Lower leg skin (tissue), 4 donors: ENCODE measurements at regions of chr11 and their contacts with region 1.

Region 1: GRCh38 chr11:130464291-130464812 is 15.9 kb downstream of the ADAMTS15 start:
- DNase-seq: no peak
- H3K4me3 ChIP-seq: no peak overlapping the region
- CTCF ChIP-seq: no peak
- POLR2A ChIP-seq: no peak

Region 2: DNA sequence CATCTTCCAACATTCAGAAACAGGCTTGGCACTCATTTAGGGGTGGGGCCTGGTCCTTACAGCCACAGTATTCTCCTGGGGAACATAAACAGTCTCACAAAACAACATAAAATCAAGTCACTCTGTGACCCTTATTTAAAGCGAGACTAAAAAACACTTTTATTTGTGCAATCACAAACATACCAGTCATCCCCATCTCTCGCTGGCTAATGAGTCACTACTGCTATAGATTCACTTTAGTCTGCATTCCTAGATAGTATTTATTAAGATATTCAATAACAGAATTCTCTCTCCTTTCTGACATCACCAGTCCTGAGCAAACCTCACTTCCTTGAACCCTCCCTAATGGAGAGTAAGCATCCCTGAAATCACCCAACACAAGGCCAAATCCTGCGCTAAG is 217.6 kb before region 1 on chr11:
- intact Hi-C with region 1: no loop called
- DNase-seq: no peak
- H3K4me3 ChIP-seq: no peak overlapping the region
- CTCF ChIP-seq: no peak
- POLR2A ChIP-seq: no peak

Region 3: DNA sequence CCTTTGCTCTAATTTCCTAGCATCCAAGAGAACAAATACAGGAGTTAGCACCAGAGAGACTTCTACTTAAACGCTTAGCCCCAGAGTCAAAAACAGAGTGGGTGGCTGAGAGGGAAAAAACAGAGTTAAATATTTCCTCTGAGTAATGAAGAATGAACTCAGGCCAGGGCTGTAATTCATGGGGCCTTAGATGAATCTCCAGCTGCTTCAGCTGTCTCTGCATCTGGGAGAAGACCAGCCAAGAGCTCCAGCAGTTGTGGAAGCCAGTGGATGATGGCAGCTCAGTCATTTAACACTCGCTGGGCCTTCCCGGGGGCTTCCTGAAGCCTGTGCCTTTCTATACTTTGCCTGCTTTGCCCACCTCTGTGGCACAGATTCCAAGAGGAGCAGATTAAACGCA is 21.6 kb before region 1 on chr11:
- intact Hi-C with region 1: no loop called
- DNase-seq: no peak
- H3K4me3 ChIP-seq: no peak overlapping the region
- CTCF ChIP-seq: no peak
- POLR2A ChIP-seq: no peak

Region 4: DNA sequence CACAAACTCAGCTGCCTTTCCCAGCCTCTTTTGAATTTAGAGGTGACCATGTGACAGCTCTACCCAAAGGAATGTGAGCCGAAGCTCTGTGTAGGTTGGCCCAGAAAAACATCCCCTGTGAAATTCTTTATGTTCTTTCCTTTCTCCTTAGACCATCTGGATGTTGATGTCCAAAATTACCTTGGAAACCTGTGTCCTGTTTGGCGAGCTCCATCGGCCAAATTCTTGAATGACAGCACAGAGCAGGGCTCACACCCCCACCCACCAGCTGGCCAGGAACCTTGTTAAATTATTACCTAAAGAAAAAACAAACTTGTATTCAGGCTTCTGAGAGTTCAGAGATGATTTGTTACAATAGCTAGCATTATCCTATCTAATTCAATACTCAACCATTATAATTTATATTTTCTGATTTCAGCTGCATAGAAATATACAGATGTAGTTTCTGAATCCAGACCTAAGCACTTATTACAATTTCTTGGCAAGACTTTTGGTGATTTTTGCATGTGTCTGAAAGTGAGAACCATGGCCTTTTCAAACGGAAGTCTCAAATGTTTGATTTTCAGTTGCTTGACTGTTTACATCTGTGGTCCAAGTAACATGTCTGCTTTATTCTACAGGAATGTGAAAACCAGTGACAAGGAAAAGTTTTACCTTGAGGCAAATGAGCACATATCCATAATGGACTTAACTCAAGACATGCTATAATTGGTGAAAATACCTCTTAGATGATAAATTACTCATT is 1460.3 kb after region 1 on chr11:
- intact Hi-C with region 1: loop called (anchors 5 kb)
- DNase-seq: no peak
- H3K4me3 ChIP-seq: no peak overlapping the region
- CTCF ChIP-seq: no peak
- POLR2A ChIP-seq: no peak